ENCODE measurements at regions of chr19 and their contacts with region 1.

Region 1: GRCh38 chr19:46392243-46392801 is 21.0 kb downstream of the CCDC8 start:
- DNase-seq: no peak
- ATAC-seq: no peak
- H3K4me3 Mint-ChIP-seq: no peak overlapping the region
- H3K27ac Mint-ChIP-seq: no peak overlapping the region
- H3K4me1 Mint-ChIP-seq: peaks cover 4% of the 10 kb centered on the region
- H3K27me3 Mint-ChIP-seq: no peaks in the 10 kb centered on the region

Region 2: GRCh38 chr19:46299004-46299509 is 93.3 kb before region 1 on chr19:
- CTCF ChIA-PET with region 1: no interaction called
- POLR2A ChIA-PET with region 1: no interaction called
- DNase-seq: no peak
- ATAC-seq: no peak
- H3K4me3 Mint-ChIP-seq: no peak overlapping the region
- H3K27ac Mint-ChIP-seq: no peak overlapping the region
- H3K4me1 Mint-ChIP-seq: no peaks in the 10 kb centered on the region
- H3K27me3 Mint-ChIP-seq: peaks cover 19% of the 10 kb centered on the region

Region 3: DNA sequence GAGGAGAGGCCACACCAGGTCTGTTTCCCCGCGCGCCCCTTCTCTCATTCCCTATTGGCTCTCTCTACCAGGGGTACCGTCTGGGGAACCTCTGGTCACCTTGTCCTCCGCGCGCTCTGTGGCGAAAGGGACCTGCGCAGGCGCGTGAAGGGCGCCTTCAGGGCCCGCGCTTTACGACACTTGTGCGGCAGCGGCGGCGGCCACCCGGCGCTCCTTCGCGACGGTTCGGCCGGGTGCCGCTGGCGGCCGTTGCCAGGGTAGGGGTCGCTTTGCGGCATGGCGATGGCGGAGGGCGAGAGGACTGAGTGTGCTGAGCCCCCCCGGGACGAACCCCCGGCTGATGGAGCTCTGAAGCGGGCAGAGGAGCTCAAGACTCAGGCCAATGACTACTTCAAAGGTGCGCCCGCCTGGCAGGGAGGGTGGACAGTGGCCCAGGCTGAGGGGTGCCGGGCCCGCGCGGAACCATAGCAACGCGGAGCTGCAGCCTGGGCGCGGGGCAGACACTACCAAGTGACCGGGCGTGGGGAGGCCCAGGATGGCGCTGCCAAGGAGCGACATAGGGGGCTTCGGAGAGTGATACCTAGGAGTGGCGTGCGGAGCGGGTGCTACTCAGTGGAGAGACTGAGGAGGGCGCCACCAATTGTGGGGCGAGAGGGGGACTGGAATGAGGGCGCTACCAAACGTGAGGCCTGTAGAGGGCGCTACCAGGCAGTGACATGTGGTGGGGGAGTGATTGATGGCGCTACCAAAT is 45.3 kb before region 1 on chr19 and contains the start of gene PPP5C:
- CTCF ChIA-PET with region 1: interaction called, 21 read pairs
- POLR2A ChIA-PET with region 1: no interaction called
- DNase-seq: peak; percentile 92
- ATAC-seq: peak; percentile 69
- H3K4me3 Mint-ChIP-seq: peak within 1 kb of the TSS; percentile 95
- H3K27ac Mint-ChIP-seq: peak within 1 kb of the TSS; percentile 83
- H3K4me1 Mint-ChIP-seq: peaks cover 51% of the 10 kb centered on the region
- H3K27me3 Mint-ChIP-seq: peaks cover 20% of the 10 kb centered on the region
- total RNA-seq, gene PPP5C: 118 to 126 TPM

Region 4: DNA sequence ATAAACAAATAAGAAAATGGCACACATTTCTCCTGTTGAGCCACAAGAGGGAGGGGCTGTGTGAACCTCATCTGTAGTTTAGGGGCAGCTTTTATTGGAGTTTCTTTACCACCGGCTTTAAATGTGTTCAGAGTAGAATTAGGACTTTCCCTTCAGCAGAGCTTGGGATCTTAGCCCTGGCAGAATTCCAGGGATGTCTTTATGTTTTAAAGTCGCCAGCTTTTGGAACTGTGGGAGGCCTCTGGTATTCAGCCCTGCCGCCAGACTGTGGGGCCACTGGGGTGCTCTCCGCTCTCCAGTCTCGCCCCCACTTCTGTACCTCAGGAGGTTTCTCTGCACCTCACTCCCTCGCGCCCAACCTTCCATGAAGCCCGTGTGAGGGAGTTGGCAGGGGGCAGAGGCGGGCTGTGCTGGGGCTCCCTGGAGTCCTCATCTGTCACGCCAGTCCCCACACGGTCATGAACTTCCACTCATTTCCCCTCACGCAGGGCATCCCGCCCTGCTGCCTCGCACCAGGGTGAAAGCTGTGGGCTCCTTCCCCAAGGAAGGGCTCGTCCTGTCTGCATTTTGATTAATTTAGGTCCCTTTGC is 10.5 kb before region 1 on chr19:
- CTCF ChIA-PET with region 1: interaction called, 12 read pairs
- POLR2A ChIA-PET with region 1: no interaction called
- DNase-seq: no peak
- ATAC-seq: no peak
- H3K4me3 Mint-ChIP-seq: no peak overlapping the region
- H3K27ac Mint-ChIP-seq: no peak overlapping the region
- H3K4me1 Mint-ChIP-seq: peaks cover 2% of the 10 kb centered on the region
- H3K27me3 Mint-ChIP-seq: no peaks in the 10 kb centered on the region

Region 5: GRCh38 chr19:46487802-46488445 is 95.6 kb after region 1 on chr19:
- CTCF ChIA-PET with region 1: interaction called, 20 read pairs
- POLR2A ChIA-PET with region 1: no interaction called
- DNase-seq: peak; percentile 82
- ATAC-seq: peak; percentile 78
- H3K4me3 Mint-ChIP-seq: no peak overlapping the region
- H3K27ac Mint-ChIP-seq: no peak overlapping the region
- H3K4me1 Mint-ChIP-seq: peaks cover 9% of the 10 kb centered on the region
- H3K27me3 Mint-ChIP-seq: peaks cover 55% of the 10 kb centered on the region

Region 6: DNA sequence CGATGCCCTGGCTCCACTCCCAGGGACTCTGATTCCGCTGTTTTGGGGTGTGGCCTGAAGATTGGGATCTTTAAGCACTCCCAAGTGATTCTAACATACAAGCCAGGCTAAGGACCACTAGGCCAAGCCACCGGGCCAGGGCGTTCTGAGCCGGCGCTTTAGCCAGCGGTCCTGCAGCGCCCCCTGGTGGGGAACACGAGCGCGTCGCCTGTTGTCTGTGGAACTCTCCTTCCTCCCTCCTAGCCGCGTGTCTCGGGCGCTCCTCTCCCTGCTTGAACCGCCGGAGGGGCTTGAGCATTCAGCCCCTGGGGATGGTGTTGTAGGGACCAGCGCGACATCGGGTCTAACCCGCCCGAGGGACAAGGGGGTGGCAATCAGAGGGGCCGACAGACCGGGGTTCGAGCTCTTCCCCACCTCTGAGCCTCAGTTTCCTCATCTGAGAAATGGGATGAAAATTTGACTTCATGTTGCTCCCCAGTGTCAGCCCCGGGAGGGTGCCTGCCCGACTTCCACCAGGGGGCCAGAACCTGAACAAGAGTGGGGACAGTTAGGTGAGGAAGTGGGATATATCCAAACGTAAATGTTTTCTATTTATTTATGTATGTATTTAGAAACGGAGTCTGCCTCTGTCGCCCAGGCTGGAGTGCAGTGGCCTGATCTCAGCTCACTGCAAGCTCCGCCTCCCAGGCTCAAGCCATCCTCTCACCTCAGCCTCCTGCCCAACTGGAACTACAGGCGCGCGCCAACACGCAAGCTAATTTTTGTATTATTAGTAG is 121.3 kb after region 1 on chr19:
- CTCF ChIA-PET with region 1: interaction called, 16 read pairs
- POLR2A ChIA-PET with region 1: no interaction called
- DNase-seq: peak; percentile 86
- ATAC-seq: peak; percentile 89
- H3K4me3 Mint-ChIP-seq: no peak overlapping the region
- H3K27ac Mint-ChIP-seq: no peak overlapping the region
- H3K4me1 Mint-ChIP-seq: peaks cover 20% of the 10 kb centered on the region
- H3K27me3 Mint-ChIP-seq: peaks cover 14% of the 10 kb centered on the region